Heart left ventricle (tissue), 16 donors: ENCODE measurements at regions of chr19 and their contacts with region 1.

Region 1: DNA sequence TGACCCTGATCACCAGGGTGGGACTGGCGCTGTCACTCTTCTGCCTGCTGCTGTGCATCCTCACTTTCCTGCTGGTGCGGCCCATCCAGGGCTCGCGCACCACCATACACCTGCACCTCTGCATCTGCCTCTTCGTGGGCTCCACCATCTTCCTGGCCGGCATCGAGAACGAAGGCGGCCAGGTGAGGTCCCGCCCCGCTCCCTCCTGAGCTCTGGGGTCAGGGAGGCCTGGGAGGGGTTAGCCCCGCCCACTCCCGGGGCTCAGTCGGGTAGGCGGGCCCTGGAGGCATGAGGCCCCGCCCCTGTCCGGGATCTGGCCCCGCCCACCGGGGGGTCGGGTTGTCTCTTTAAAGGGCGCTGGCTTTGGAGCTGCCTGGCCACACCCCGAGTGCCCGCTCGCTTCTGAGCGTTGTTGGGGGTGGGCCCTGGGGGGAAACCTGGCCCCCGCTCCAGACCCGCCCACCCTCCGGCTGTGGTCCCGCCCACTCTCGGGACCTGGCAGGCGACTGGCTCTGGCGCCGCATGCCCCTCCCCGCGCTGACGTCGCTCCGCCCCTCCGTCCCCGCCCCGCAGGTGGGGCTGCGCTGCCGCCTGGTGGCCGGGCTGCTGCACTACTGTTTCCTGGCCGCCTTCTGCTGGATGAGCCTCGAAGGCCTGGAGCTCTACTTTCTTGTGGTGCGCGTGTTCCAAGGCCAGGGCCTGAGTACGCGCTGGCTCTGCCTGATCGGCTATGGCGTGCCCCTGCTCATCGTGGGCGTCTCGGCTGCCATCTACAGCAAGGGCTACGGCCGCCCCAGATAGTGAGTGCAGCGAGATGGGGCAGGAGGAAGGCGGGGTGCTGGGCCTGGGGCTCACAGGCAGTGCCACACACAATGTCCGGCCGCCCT is 13.1 kb downstream of the DDX39A start:
- DNase-seq: peak; percentile 83 to 94 (median 87)
- ATAC-seq: peak; percentile 85 to 94 (median 88)
- H3K4me3 ChIP-seq: peak overlapping the region in 9 of 12 donors; percentile 16 to 49 (median 36)
- H3K27ac ChIP-seq: peak overlapping the region in 11 of 12 donors; percentile 26 to 82 (median 61)
- H3K4me1 ChIP-seq: peaks cover 0 to 38% (median 6%) of the 10 kb centered on the region in 12 donors
- H3K27me3 ChIP-seq: no peaks in the 10 kb centered on the region
- CTCF ChIP-seq: peak; percentile 91 to 98 (median 95)
- POLR2A ChIP-seq: no peak

Region 2: GRCh38 chr19:14198384-14199376 is 207.3 kb before region 1 on chr19:
- intact Hi-C with region 1: loop called in 1 of 10 experiments (anchors 10 kb)
- DNase-seq: no peak
- ATAC-seq: no peak
- H3K4me3 ChIP-seq: no peak overlapping the region
- H3K27ac ChIP-seq: no peak overlapping the region
- H3K4me1 ChIP-seq: peaks cover 0 to 5% (median 0%) of the 10 kb centered on the region in 12 donors
- H3K27me3 ChIP-seq: no peaks in the 10 kb centered on the region
- CTCF ChIP-seq: no peak
- POLR2A ChIP-seq: no peak

Region 3: DNA sequence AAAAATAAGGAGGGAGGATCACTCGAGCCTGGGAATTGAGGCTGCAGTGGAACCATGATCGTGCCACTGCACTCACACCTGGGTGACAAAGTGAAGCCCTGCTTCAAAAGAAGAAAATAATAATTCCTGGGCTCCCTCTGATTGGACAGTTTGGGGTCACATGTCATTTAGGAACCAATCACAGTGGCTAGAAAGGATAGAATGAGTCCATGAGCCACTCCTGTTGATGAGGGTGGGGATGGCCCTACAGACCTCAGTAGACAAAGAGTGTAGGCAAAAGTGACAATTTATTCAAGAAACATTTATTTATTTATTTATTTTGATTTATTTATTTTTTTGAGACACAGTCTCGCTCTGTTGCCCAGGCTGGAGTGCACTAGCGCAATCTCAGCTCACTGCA is 51.6 kb before region 1 on chr19:
- intact Hi-C with region 1: loop called in 1 of 10 experiments (anchors 5 kb)
- DNase-seq: no peak
- ATAC-seq: no peak
- H3K4me3 ChIP-seq: no peak overlapping the region
- H3K27ac ChIP-seq: no peak overlapping the region
- H3K4me1 ChIP-seq: peaks cover 0 to 34% (median 0%) of the 10 kb centered on the region in 12 donors
- H3K27me3 ChIP-seq: no peaks in the 10 kb centered on the region
- CTCF ChIP-seq: no peak
- POLR2A ChIP-seq: no peak

Region 4: GRCh38 chr19:14366498-14366915 is 39.5 kb before region 1 on chr19:
- intact Hi-C with region 1: loop called in 3 of 10 experiments (anchors 1 to 5 kb)
- DNase-seq: peak; percentile 56 to 79 (median 61)
- ATAC-seq: peak in 1 of 4 donors; percentile 36
- H3K4me3 ChIP-seq: peak overlapping the region in 1 of 12 donors; percentile 13
- H3K27ac ChIP-seq: peak overlapping the region in 1 of 12 donors; percentile 93
- H3K4me1 ChIP-seq: peaks cover 4 to 98% (median 27%) of the 10 kb centered on the region in 12 donors
- H3K27me3 ChIP-seq: no peaks in the 10 kb centered on the region
- CTCF ChIP-seq: no peak
- POLR2A ChIP-seq: no peak